Activated B cell treated with CpG ODN at 0.5 μM for 24 hours (primary cell): ENCODE measurements at regions of chr14 and their contacts with region 1.

Region 1: GRCh38 chr14:72516936-72517700 is 376.8 kb downstream of the DPF3 start:
- DNase-seq: peak; percentile 56
- ATAC-seq: peak; percentile 62
- H3K4me3 Mint-ChIP-seq: peak overlapping the region; percentile 30
- H3K27ac Mint-ChIP-seq: peak overlapping the region; percentile 96
- H3K4me1 Mint-ChIP-seq: peaks cover 58% of the 10 kb centered on the region
- H3K27me3 Mint-ChIP-seq: no peaks in the 10 kb centered on the region
- CTCF ChIP-seq: peak; percentile 90

Region 2: GRCh38 chr14:72535485-72535884 is 18.4 kb after region 1 on chr14:
- CTCF ChIA-PET with region 1: interaction called, 3 read pairs
- POLR2A ChIA-PET with region 1: interaction called, 4 read pairs
- intact Hi-C with region 1: loop called (anchors 1 kb)
- DNase-seq: no peak
- ATAC-seq: peak; percentile 90
- H3K4me3 Mint-ChIP-seq: peak overlapping the region; percentile 49
- H3K27ac Mint-ChIP-seq: peak overlapping the region; percentile 2
- H3K4me1 Mint-ChIP-seq: peaks cover 85% of the 10 kb centered on the region
- H3K27me3 Mint-ChIP-seq: no peaks in the 10 kb centered on the region
- CTCF ChIP-seq: no peak

Region 3: GRCh38 chr14:72573725-72574417 is 56.8 kb after region 1 on chr14:
- CTCF ChIA-PET with region 1: no interaction called
- POLR2A ChIA-PET with region 1: no interaction called
- intact Hi-C with region 1: no loop called
- DNase-seq: no peak
- ATAC-seq: no peak
- H3K4me3 Mint-ChIP-seq: no peak overlapping the region
- H3K27ac Mint-ChIP-seq: no peak overlapping the region
- H3K4me1 Mint-ChIP-seq: peaks cover 8% of the 10 kb centered on the region
- H3K27me3 Mint-ChIP-seq: no peaks in the 10 kb centered on the region
- CTCF ChIP-seq: no peak

Region 4: GRCh38 chr14:72679536-72680151 is 162.5 kb after region 1 on chr14:
- CTCF ChIA-PET with region 1: no interaction called
- POLR2A ChIA-PET with region 1: no interaction called
- intact Hi-C with region 1: loop called (anchors 2 kb)
- DNase-seq: no peak
- ATAC-seq: no peak
- H3K4me3 Mint-ChIP-seq: no peak overlapping the region
- H3K27ac Mint-ChIP-seq: no peak overlapping the region
- H3K4me1 Mint-ChIP-seq: peaks cover 44% of the 10 kb centered on the region
- H3K27me3 Mint-ChIP-seq: no peaks in the 10 kb centered on the region
- CTCF ChIP-seq: no peak

Region 5: GRCh38 chr14:72776701-72777261 is 259.7 kb after region 1 on chr14:
- CTCF ChIA-PET with region 1: interaction called, 3 read pairs
- POLR2A ChIA-PET with region 1: no interaction called
- intact Hi-C with region 1: loop called (anchors 10 kb)
- DNase-seq: no peak
- ATAC-seq: peak; percentile 7
- H3K4me3 Mint-ChIP-seq: no peak overlapping the region
- H3K27ac Mint-ChIP-seq: peak overlapping the region; percentile 13
- H3K4me1 Mint-ChIP-seq: peaks cover 45% of the 10 kb centered on the region
- H3K27me3 Mint-ChIP-seq: no peaks in the 10 kb centered on the region
- CTCF ChIP-seq: no peak

Region 6: GRCh38 chr14:72904840-72905561 is 387.9 kb after region 1 on chr14:
- CTCF ChIA-PET with region 1: interaction called, 236 read pairs
- POLR2A ChIA-PET with region 1: interaction called, 17 read pairs
- intact Hi-C with region 1: loop called (anchors 1 kb)
- DNase-seq: no peak
- ATAC-seq: peak; percentile 79
- H3K4me3 Mint-ChIP-seq: no peak overlapping the region
- H3K27ac Mint-ChIP-seq: no peak overlapping the region
- H3K4me1 Mint-ChIP-seq: peaks cover 17% of the 10 kb centered on the region
- H3K27me3 Mint-ChIP-seq: no peaks in the 10 kb centered on the region
- CTCF ChIP-seq: no peak

Region 7: DNA sequence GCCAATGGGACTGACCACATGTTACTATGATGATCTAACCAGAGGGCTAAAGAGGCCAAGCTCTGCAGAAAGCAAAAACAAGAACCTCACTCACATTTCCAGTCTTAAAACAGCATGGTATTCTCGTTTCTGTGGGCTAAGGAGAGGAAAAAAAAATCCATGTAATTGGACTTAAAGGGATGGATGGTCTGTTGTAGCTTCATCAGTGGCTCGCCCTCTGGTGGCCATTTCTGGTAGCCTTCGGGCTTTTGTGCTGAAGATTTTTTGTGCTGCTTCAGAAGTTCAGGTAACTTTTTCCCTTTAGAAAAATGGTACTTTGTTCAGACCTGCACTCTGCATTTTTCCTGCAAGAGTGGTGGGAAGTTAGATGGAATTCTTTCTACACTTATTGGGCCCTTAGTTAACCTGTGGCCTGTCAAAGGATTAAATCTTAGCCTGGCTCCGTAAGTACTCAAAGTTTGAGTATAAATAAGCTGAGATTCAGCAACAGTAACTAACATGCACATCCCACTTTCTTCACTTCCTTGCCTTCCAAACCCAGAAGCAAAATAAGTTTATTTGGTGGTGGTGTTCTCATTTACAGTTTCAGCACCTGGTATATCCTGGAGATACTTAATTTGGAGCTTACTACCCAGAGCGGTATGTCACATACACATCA is 431.5 kb after region 1 on chr14:
- CTCF ChIA-PET with region 1: interaction called, 100 read pairs
- POLR2A ChIA-PET with region 1: interaction called, 3 read pairs
- intact Hi-C with region 1: loop called (anchors 1 kb)
- DNase-seq: peak; percentile 48
- ATAC-seq: peak; percentile 60
- H3K4me3 Mint-ChIP-seq: no peak overlapping the region
- H3K27ac Mint-ChIP-seq: no peak overlapping the region
- H3K4me1 Mint-ChIP-seq: no peaks in the 10 kb centered on the region
- H3K27me3 Mint-ChIP-seq: no peaks in the 10 kb centered on the region
- CTCF ChIP-seq: no peak